Dorsolateral prefrontal cortex (tissue), 120 donors: ENCODE measurements at regions of chr1 and their contacts with region 1.

Region 1: DNA sequence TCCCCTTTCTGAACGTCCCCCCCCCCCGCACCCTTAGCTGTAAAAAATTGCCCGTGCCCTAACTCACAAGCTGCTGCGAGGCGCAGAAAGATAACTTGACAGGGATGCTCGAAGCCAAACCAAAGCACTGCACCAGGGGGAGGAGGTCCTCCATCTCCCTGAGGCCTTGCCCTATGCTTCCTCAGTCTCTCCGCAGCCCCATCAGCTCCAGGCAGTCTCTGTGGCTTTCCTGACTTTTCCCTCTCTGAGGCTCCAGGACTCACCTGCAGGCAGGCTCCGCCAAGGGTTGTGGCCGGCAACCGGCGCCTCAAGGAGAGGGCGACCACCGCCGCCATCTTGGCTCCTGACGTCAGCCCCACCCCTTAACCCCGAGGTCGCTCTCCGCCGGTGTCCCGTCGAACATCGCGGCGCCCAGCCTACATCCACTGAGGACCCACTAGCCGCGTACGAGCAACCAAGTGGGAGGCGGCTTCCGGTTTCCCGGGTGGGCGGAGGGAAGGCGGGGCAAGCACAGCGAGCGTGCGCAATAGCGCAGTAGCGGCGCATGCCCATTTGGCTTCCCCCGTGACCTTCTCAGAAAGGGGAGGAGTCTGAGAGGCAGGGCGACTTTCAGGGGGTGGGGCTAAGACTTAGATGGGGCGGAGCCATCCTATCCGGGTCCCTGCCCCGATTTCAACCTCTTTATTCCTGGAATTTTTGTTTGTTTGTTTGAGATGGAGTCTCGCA is at the start of gene SDHB:
- DNase-seq: peak; percentile 96 to 99 (median 98)
- H3K4me3 ChIP-seq: peak within 1 kb of the TSS; percentile 51 to 98 (median 85)
- H3K27ac ChIP-seq: peak within 1 kb of the TSS in 58 of 59 donors; percentile 37 to 98 (median 87)
- H3K27me3 ChIP-seq: no peaks in the 10 kb centered on the region
- CTCF ChIP-seq: peak in 34 of 56 donors; percentile 7 to 54 (median 27)
- total RNA-seq, gene SDHB: 48.8 to 115 (median 83.6) TPM

Region 2: DNA sequence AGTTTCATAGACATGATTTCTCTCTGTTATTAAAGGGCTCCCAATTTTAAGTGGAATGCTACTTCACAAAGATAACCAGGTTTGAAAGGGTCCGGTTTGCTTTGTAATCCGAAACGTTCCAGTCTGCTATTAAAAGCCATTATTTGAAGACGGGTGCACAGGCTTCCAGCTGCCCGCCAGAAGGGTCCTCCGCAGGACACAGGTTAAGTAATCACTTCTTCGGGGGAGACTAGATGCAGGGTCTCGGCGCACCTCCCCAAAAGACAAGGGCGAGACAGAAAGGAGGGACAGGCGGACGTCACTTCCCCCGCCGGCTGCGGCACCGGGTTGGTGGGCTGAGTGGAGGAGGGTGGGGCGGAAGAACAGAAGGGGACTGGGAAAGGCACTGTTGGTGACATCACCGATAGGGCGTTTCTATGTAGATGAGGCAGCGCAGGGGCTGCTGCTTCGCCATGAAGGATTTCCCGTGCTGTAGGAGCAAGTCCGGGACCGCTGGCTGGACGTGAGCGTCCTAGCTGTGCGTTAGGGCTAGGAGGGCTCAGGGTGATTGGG is 149.2 kb before region 1 on chr1:
- intact Hi-C with region 1: loop called in 1 of 2 experiments (anchors 5 kb)
- DNase-seq: peak; percentile 98 to 100 (median 100)
- H3K4me3 ChIP-seq: peak overlapping the region; percentile 38 to 95 (median 71)
- H3K27ac ChIP-seq: peak overlapping the region; percentile 89 to 100 (median 99)
- H3K27me3 ChIP-seq: no peaks in the 10 kb centered on the region
- CTCF ChIP-seq: peak in 6 of 56 donors; percentile 2 to 26 (median 10)

Region 3: GRCh38 chr1:16971341-16972188 is 82.3 kb before region 1 on chr1:
- intact Hi-C with region 1: no loop called
- DNase-seq: peak in 1 of 10 donors; percentile 23
- H3K4me3 ChIP-seq: no peak overlapping the region
- H3K27ac ChIP-seq: peak overlapping the region in 14 of 59 donors; percentile 6 to 59 (median 20)
- H3K27me3 ChIP-seq: no peaks in the 10 kb centered on the region
- CTCF ChIP-seq: no peak

Region 4: GRCh38 chr1:16999863-17000262 is 54.0 kb before region 1 on chr1:
- intact Hi-C with region 1: no loop called
- DNase-seq: no peak
- H3K4me3 ChIP-seq: no peak overlapping the region
- H3K27ac ChIP-seq: no peak overlapping the region
- H3K27me3 ChIP-seq: no peaks in the 10 kb centered on the region
- CTCF ChIP-seq: peak in 3 of 56 donors; percentile 6 to 16 (median 14)

Region 5: DNA sequence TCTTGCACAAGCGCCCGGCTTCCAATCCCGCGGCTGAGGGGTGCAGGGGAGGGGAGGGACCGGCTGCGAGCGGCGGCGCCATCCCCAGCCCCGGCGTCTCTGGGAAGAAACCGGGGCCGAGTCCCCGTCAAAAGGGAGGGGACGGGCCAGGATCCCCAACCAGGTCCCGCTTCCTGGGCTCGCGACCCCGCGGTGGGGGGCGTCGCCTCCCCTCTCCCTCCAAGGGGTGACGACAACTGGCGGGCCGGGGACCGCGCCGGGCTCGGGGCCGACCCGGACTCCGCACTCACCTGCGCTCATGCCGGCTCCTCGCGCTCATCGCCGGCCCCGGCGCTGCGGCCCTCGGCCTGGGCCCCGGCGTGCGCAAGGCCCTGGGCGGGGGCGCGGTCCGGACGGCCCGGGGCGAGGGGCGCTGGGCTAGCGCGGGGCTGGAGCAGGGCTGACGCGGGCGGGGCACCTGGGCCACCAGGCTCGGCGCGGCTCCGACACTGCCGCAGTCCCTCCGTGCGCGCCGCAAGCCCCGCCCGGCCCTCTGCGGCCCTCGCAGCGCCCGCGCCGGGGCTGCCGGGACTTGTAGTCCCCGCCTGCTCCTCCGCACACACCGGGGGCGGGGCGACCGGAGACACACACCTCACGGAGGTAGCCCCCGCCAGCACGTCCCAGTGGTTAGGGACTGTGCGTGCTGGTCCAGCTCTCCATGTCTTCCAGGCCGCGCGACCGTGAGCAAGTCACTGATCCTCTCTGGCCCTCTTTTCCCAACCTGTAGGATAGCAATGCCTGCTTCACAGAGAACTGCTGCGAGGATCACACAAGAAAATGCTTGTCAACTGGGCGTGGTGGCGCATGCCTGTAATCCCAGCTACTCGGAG is 42.2 kb before region 1 on chr1 and contains the start of gene ATP13A2:
- intact Hi-C with region 1: loop called in 1 of 2 experiments (anchors 5 kb)
- DNase-seq: peak; percentile 67 to 94 (median 85)
- H3K4me3 ChIP-seq: peak within 1 kb of the TSS; percentile 68 to 97 (median 90)
- H3K27ac ChIP-seq: peak within 1 kb of the TSS in 47 of 59 donors; percentile 19 to 87 (median 65)
- H3K27me3 ChIP-seq: no peaks in the 10 kb centered on the region
- CTCF ChIP-seq: peak in 4 of 56 donors; percentile 9 to 19 (median 10)
- total RNA-seq, gene ATP13A2: 104 to 254 (median 196) TPM

Region 6: GRCh38 chr1:17405898-17406759 is 352.3 kb after region 1 on chr1:
- intact Hi-C with region 1: loop called (anchors 2 to 10 kb)
- DNase-seq: peak; percentile 50 to 75 (median 62)
- H3K4me3 ChIP-seq: no peak overlapping the region
- H3K27ac ChIP-seq: no peak overlapping the region
- H3K27me3 ChIP-seq: no peaks in the 10 kb centered on the region
- CTCF ChIP-seq: peak; percentile 28 to 84 (median 71)

Region 7: GRCh38 chr1:17439250-17440073 is 385.6 kb after region 1 on chr1 and contains the start of gene RCC2:
- intact Hi-C with region 1: loop called in 1 of 2 experiments (anchors 10 kb)
- DNase-seq: peak; percentile 36 to 82 (median 57)
- H3K4me3 ChIP-seq: peak within 1 kb of the TSS; percentile 61 to 87 (median 75)
- H3K27ac ChIP-seq: peak within 1 kb of the TSS; percentile 6 to 95 (median 84)
- H3K27me3 ChIP-seq: no peaks in the 10 kb centered on the region
- CTCF ChIP-seq: peak in 11 of 56 donors; percentile 3 to 27 (median 12)
- total RNA-seq, gene RCC2: 22.3 to 50.7 (median 35.3) TPM